ENCODE measurements at regions of chr2 and their contacts with region 1.

Region 1: DNA sequence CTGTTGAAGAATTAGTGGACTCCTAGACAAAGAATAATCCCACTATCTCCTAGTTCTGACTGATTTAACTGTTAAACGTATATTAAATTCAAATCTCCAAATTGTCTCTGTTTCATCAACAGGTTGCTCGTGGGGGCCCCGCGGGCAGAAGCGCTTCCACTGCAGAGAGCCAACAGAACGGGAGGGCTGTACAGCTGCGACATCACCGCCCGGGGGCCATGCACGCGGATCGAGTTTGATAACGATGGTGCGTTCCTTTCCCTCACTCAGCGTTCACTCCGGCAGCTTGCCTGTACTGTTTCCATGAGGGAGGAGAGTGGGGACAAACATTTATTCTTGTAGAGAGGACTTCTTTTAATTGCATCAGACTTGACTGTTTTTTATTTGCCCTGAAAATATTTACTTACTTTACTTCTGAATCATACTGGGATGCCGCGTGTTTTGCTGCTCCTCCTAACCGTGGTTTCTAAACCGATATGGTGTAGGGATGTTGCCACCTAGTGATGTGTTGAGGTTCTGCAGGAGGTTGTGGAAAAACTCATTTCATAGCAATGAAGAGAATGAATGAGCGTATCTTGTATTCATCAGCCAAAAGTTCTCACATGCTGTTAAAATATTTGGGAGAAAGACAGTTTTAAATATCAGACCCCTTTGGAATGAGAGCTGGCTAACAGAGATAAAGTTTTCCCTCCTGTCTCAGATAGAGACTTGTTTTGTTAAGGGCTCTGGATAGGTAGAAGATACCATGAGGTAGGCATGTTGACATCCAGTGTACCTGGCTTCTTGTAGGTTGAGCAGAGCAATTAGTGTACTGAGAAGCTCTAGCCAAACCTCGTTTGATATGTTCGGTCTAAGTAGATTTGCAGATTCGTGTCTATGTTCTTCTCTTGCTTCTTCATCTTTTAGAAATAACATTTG is 38.3 kb downstream of the ITGA6 start:
- DNase-seq: peak in 1 of 2 donors; percentile 70
- H3K4me3 ChIP-seq: peak overlapping the region; percentile 15 to 36
- H3K27ac ChIP-seq: no peak overlapping the region
- H3K4me1 ChIP-seq: peaks cover 0 to 20% (median 0%) of the 10 kb centered on the region in 4 donors
- H3K27me3 ChIP-seq: no peaks in the 10 kb centered on the region
- CTCF ChIP-seq: peak; percentile 74 to 81

Region 2: DNA sequence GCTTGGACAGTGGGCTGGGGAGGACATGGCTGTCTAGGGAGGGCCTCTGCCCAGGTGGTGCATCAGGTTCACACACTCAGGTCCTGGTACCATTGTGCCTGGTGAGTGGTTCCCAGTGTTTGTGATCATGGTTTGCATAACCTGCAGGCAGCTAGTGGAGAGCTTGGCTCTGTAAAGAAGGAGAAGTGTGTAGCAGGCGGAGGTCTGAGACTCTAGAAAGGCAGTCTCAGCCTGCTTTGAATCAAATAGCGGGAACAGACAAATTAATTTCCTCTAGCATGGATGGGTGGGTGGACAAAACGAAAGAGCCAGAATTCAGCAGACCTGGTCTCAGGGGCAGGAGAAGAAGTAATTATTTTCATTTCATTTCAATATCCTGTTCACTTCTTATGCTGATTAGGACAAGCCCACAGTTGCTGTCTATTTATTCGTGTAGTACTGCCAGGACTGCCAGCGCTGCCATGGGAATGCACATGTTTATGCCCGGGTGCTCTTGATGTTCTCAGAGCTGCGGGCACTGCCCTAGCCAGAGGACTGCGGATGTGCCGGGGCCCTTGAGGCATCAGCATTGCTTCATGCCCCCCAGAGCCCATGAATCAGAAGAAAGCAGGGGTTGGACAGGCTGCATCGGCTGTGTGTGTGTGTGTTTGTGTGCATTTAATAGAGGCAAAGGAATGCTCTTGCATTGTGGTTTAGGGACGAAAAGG is 317.6 kb before region 1 on chr2:
- intact Hi-C with region 1: no loop called
- DNase-seq: no peak
- H3K4me3 ChIP-seq: no peak overlapping the region
- H3K27ac ChIP-seq: no peak overlapping the region
- H3K4me1 ChIP-seq: no peaks in the 10 kb centered on the region
- H3K27me3 ChIP-seq: peaks cover 0 to 25% of the 10 kb centered on the region in 2 donors
- CTCF ChIP-seq: no peak

Region 3: DNA sequence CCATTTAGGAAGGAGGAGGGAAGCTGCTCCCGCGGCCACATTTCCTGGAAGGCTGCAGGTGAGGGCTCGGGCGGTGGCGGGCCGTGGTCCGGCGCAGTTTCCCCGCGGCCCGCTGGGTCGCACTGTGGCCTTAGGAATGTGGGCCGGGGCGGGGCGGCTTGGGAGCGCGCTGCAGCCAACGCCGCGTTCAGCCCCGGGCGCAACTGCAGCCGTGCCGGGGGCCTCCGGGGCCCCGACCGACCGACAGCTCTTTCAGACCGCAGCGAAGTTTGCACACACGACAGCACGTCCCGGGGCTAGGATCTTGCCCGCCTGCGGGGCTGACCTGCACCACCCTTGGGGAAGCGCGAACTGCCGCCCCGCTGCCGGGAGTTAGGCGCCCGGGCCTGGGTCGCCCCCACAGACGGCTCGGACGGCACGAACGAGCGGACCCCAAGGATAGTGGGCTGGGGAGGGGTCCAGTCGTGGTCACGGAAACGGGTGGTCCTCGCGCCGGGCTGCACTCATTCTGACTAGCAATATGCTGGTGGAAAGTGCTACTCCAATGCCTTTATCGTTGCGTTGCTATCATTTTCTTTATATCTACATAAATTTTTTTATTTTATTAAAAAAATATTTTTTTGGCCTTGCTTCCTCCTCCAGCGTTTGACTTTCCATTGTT is 293.0 kb before region 1 on chr2:
- intact Hi-C with region 1: loop called (anchors 2 kb)
- DNase-seq: peak; percentile 54 to 72
- H3K4me3 ChIP-seq: peak overlapping the region; percentile 47 to 53
- H3K27ac ChIP-seq: no peak overlapping the region
- H3K4me1 ChIP-seq: peaks cover 0 to 12% (median 10%) of the 10 kb centered on the region in 4 donors
- H3K27me3 ChIP-seq: peaks cover 0 to 13% of the 10 kb centered on the region in 2 donors
- CTCF ChIP-seq: peak; percentile 79 to 84

Region 4: DNA sequence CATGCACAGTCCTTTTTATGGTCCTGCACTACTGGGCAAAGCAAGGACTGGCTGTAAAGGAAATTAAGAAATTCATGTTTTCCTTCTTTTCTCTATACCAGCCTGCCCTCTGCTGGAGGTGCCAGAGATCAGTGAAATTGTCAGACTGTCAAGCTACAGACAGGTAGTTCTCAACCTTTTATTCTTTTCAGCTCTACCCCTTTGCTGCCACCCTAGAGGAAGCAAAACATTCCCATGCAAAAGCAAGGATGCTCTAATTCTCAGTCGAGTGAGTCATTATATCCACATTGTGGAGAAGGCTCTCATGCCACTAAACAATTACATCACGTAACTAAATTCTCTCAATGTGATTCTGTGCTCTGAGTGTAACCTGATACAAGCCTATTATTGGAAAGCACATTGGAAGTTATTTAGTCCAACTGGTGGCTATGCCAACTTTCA is 244.9 kb after region 1 on chr2:
- intact Hi-C with region 1: loop called (anchors 10 kb)
- DNase-seq: no peak
- H3K4me3 ChIP-seq: no peak overlapping the region
- H3K27ac ChIP-seq: no peak overlapping the region
- H3K4me1 ChIP-seq: peaks cover 0 to 18% (median 0%) of the 10 kb centered on the region in 4 donors
- H3K27me3 ChIP-seq: no peaks in the 10 kb centered on the region
- CTCF ChIP-seq: peak; percentile 47 to 59